ENCODE measurements at regions of chr17 and their contacts with region 1.

Region 1: DNA sequence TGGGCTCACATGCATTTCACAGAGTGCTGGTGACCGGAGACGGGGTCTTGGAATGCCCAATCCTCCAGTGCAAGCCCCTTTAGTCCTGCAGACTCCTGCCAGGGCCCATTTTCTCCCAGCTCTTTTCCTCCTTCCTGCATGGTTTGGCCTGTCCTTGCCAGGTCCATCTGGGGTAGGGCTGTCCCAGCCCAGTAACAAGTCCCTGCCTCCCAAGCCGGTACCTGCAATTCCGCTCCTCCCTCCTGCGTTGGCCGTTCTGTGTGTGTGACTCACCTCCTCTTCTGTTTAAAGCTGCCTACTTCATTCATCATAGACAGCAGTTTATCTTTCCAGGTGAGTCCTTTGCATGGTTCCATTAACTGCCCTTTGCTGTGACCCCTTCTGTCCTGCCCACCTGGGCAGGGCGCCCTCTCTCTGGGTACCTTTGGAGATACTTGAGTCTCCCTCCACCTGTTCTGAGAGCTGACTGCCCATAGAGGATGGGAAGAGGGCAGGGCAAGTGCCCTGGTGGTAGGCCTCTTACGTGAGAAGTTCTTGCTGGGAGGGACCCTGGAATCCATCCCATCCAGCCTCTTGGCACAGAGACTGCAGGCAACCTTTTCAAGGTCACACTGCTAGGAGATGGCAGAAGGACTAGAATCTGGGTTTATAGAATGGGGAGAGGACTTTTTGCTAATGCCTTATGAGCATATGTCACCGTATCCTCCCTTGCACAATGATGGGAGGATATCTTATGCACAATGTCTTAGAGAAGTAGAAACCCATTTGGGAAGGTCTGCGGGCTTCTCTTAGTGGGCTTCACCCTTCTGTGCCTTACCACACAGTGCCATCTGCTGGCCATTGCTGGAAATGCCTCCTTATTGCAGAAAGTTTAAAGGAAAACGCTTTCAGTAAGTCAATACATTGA is 29.7 kb upstream of the LGALS9 start:
- DNase-seq: peak; percentile 90
- ATAC-seq: peak; percentile 19; the same call in 1 of the 2 replicates
- H3K4me3 Mint-ChIP-seq: no peak overlapping the region
- H3K27ac Mint-ChIP-seq: no peak overlapping the region; the same call in 1 of the 2 replicates
- H3K4me1 Mint-ChIP-seq: peaks cover 7% of the 10 kb centered on the region
- H3K27me3 Mint-ChIP-seq: no peaks in the 10 kb centered on the region
- CTCF ChIP-seq: peak; percentile 83

Region 2: GRCh38 chr17:27245230-27245696 is 356.1 kb before region 1 on chr17:
- CTCF ChIA-PET with region 1: interaction called, 14 read pairs
- POLR2A ChIA-PET with region 1: no interaction called
- DNase-seq: peak; percentile 81
- ATAC-seq: peak; percentile 97
- H3K4me3 Mint-ChIP-seq: peak overlapping the region; percentile 2; the same call in 1 of the 2 replicates
- H3K27ac Mint-ChIP-seq: no peak overlapping the region
- H3K4me1 Mint-ChIP-seq: peaks cover 25% of the 10 kb centered on the region
- H3K27me3 Mint-ChIP-seq: peaks cover under 1% of the 10 kb centered on the region; the same call in 1 of the 2 replicates
- CTCF ChIP-seq: no peak

Region 3: DNA sequence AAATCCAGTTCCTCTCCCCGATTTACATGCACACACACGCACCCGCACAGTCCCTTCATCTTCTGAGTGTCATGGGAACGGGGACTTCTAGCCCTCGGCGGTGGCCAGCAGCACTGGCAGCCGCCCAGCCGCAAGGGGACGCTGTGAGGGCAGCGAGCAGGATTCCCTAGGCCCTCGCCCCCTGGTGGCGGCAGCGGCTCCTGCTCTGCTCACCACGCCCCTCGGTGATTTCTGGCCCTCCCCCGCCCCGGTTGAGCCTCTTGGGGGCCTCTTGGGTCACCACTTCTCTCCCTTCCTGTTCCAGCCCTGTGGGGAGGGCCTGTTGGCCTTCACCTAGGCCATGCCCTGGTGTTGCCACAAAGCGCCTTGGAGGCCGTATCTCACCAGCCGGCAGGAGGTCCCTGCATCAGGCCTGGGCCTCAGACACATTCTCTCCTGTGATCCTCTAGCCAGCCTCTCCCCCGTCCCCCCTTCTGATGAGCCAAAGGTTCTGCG is 220.3 kb before region 1 on chr17:
- CTCF ChIA-PET with region 1: interaction called, 17 read pairs
- POLR2A ChIA-PET with region 1: no interaction called
- DNase-seq: peak; percentile 92
- ATAC-seq: peak; percentile 92
- H3K4me3 Mint-ChIP-seq: no peak overlapping the region
- H3K27ac Mint-ChIP-seq: no peak overlapping the region
- H3K4me1 Mint-ChIP-seq: no peaks in the 10 kb centered on the region
- H3K27me3 Mint-ChIP-seq: no peaks in the 10 kb centered on the region
- CTCF ChIP-seq: peak; percentile 100

Region 4: DNA sequence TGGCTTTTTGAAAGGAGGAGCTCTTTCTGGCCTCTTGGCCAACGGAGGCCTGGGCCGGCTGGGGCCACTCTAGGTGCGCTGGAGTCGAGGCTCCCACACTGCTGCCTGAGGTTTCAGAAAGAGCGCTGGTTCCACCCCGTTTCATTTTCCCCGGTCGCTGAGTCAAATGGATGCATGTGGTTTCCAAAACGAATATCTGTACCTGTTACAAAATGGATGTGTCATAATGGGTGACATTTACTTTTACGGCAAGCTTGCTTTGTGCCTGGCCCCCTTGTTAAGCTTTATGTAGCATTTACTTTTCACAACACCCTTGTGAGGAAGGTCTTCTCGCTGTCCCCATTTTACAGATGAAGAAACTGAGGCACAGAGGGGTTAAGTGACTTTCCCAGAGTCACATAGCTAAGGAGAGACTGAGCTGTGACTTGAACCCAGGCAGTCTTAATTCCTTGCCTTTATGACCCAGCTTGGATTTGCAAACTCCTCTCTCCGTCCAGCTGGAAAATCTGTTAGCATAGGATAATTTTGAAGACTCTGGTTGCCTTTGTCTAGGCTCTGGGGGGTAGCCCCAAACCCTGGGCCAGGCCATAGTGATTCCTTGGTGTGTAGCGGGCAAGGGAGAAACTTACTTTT is 134.5 kb before region 1 on chr17:
- CTCF ChIA-PET with region 1: interaction called, 15 read pairs
- POLR2A ChIA-PET with region 1: no interaction called
- DNase-seq: no peak
- ATAC-seq: peak; percentile 46
- H3K4me3 Mint-ChIP-seq: peak overlapping the region; percentile 7; the same call in 1 of the 2 replicates
- H3K27ac Mint-ChIP-seq: peak overlapping the region; percentile 94
- H3K4me1 Mint-ChIP-seq: peaks cover 83% of the 10 kb centered on the region
- H3K27me3 Mint-ChIP-seq: no peaks in the 10 kb centered on the region; the same call in 1 of the 2 replicates
- CTCF ChIP-seq: no peak

Region 5: DNA sequence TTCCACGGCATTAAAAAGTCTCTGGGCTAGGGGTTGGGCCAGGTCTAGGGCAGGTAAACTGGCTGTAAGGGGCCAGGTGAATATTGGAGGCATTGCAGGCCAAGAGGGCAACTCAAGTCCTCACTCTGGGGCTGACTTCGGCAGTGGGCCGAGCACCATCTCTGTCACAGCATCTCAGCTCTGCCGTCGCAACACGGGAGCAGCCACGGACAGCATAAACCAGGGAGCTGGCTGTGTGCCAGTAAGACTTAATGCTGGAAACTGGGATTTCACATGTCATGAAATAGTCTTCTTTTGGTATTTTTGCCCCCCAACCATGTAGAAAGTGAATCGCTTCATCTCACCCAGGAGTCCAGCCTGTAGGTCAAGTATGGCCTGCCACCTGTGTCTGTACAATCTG is 17.1 kb after region 1 on chr17:
- CTCF ChIA-PET with region 1: interaction called, 10 read pairs
- POLR2A ChIA-PET with region 1: no interaction called
- DNase-seq: no peak
- ATAC-seq: no peak
- H3K4me3 Mint-ChIP-seq: no peak overlapping the region
- H3K27ac Mint-ChIP-seq: no peak overlapping the region
- H3K4me1 Mint-ChIP-seq: no peaks in the 10 kb centered on the region
- H3K27me3 Mint-ChIP-seq: no peaks in the 10 kb centered on the region
- CTCF ChIP-seq: no peak

Region 6: GRCh38 chr17:27674335-27674734 is 73.0 kb after region 1 on chr17:
- CTCF ChIA-PET with region 1: no interaction called
- POLR2A ChIA-PET with region 1: no interaction called
- DNase-seq: no peak
- ATAC-seq: no peak
- H3K4me3 Mint-ChIP-seq: no peak overlapping the region
- H3K27ac Mint-ChIP-seq: no peak overlapping the region
- H3K4me1 Mint-ChIP-seq: no peaks in the 10 kb centered on the region
- H3K27me3 Mint-ChIP-seq: no peaks in the 10 kb centered on the region
- CTCF ChIP-seq: no peak